Dorsolateral prefrontal cortex (tissue), 120 donors: ENCODE measurements at regions of chr7 and their contacts with region 1.

Region 1: DNA sequence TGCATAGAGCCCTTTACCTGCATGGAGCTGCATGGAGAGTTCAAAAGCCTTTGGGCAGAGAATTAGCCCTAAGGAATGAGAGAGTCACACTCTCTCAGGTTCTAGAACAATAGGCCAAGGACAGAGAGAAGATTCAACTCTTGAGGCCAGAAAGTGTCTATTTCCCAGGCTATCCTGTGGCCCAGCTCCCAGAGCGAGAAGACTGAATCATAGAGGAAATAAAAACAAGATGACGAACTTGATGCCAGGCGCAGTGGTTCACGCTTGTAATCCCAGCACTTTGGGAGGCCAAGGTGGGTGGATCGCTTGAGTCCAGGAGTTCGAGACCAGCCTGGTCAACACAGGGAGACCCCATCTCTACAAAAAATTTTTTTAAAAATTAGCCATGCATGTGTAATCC is 18.3 kb upstream of the PODXL start:
- DNase-seq: no peak
- H3K4me3 ChIP-seq: no peak overlapping the region
- H3K27ac ChIP-seq: no peak overlapping the region
- H3K27me3 ChIP-seq: no peaks in the 10 kb centered on the region
- CTCF ChIP-seq: no peak

Region 2: GRCh38 chr7:131636092-131636491 is 61.4 kb after region 1 on chr7:
- intact Hi-C with region 1: loop called in 1 of 2 experiments (anchors 5 kb)
- DNase-seq: no peak
- H3K4me3 ChIP-seq: no peak overlapping the region
- H3K27ac ChIP-seq: no peak overlapping the region
- H3K27me3 ChIP-seq: no peaks in the 10 kb centered on the region
- CTCF ChIP-seq: no peak